GM13976 (cell line): ENCODE measurements at regions of chr6 and their contacts with region 1.

Region 1: DNA sequence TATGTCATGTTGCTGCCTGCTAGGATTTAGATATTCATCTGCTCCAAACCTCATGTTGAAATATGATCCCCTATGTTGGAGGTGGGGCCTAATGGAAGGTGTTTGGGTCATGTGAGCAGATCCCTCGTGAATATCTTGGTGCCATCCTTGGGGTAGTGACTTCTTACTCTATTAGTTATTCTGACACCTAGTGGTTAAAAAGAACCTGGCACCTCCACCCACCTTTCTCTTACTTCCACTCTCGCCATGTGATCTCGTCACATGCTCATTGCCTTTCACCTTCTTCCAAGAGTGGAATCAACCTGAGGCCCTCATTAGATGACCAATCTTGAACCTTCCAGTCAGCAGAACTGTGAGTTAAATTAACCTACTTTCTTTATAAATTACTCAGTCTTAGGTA is 549.4 kb upstream of the SYNCRIP start:
- DNase-seq: no peak
- CTCF ChIP-seq: no peak

Region 2: DNA sequence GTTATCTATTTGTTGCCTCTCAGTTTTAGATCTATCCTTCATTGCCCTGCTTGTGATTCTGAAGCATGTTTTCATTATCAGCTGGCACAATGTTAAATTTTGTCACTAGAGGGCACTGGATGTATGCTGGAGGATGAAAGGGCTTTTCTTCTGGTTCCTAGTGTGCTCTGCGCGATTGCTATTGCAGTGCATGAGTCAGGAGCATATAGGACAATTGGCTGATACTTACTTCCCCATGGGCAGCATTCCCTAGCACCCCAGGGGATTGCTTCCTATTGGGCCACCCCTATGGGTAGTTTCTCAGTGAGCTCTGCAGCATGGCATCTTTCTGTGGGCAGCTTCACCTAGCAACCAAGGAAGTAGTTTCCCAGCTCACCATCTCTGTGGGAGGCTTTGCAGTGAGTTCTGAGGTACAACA is 269.1 kb before region 1 on chr6:
- in situ Hi-C with region 1: loop called (anchors 25 kb)
- DNase-seq: peak; percentile 30
- CTCF ChIP-seq: peak; percentile 66